Activated CD4-positive, alpha-beta T cell treated with anti-CD3 and anti-CD28 coated beads for 36 hours (primary cell): ENCODE measurements at regions of chr1 and their contacts with region 1.

Region 1: DNA sequence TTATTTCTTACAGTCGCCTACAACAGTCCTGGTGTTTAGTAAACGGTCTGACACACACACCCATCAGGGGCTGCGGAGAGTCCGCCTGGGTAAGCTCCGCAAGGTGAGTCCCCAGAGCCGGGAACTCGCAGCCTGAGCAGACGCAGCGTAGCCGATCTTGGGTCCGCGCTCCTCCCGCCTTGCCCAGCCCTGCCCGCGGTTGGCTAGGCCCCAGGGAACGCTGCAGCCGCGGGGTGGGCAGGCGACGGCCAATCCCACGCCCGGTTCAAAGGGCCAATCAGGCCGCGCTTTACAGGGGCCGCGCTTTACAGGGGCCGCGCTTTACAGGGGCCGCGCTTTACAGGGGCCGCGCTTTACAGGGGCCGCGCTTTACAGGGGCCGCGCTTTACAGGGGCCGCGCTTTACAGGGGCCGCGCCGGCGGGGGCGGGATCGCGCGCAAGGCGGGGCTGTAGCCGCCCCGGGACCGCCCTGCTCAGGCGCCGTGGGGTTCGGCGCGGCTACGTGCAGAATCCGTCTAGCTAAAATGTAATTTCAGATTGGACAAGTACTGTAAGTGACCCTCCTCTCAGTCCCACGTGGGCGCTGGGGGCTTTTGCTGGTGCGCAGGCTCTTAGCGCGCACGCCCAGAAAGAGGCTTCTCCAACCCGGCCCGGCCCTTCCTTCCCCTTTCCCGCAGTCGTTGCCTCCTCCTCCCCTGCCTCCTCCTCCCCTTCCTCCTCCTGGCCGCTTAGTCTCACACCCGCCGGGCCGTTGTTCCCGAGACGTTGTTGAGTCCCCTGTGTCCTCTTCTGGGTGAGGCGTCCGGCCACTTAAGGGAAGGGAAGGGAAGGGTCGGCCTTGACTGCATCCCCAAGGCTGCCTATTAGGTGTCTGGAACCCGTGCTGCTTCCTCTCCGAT is at the start of gene FGGY:
- DNase-seq: peak; percentile 91
- ATAC-seq: peak; percentile 94
- H3K4me3 Mint-ChIP-seq: peak within 1 kb of the TSS; percentile 88
- H3K27ac Mint-ChIP-seq: peak within 1 kb of the TSS; percentile 73
- H3K4me1 Mint-ChIP-seq: peaks cover 20% of the 10 kb centered on the region
- H3K27me3 Mint-ChIP-seq: no peaks in the 10 kb centered on the region
- total RNA-seq, gene FGGY: 5.6 to 8.1 TPM

Region 2: GRCh38 chr1:58755468-58755872 is 541.1 kb before region 1 on chr1:
- CTCF ChIA-PET with region 1: no interaction called
- POLR2A ChIA-PET with region 1: no interaction called
- intact Hi-C with region 1: loop called in 1 of 2 experiments (anchors 10 kb)
- DNase-seq: peak; percentile 82
- ATAC-seq: peak; percentile 96
- H3K4me3 Mint-ChIP-seq: peak overlapping the region; percentile 30
- H3K27ac Mint-ChIP-seq: peak overlapping the region; percentile 84
- H3K4me1 Mint-ChIP-seq: peaks cover 36% of the 10 kb centered on the region
- H3K27me3 Mint-ChIP-seq: no peaks in the 10 kb centered on the region

Region 3: GRCh38 chr1:58903514-58904298 is 392.9 kb before region 1 on chr1:
- CTCF ChIA-PET with region 1: no interaction called
- POLR2A ChIA-PET with region 1: no interaction called
- intact Hi-C with region 1: loop called (anchors 5 kb)
- DNase-seq: peak; percentile 92
- ATAC-seq: peak; percentile 94
- H3K4me3 Mint-ChIP-seq: peak overlapping the region; percentile 62
- H3K27ac Mint-ChIP-seq: peak overlapping the region; percentile 80
- H3K4me1 Mint-ChIP-seq: peaks cover 15% of the 10 kb centered on the region
- H3K27me3 Mint-ChIP-seq: no peaks in the 10 kb centered on the region

Region 4: DNA sequence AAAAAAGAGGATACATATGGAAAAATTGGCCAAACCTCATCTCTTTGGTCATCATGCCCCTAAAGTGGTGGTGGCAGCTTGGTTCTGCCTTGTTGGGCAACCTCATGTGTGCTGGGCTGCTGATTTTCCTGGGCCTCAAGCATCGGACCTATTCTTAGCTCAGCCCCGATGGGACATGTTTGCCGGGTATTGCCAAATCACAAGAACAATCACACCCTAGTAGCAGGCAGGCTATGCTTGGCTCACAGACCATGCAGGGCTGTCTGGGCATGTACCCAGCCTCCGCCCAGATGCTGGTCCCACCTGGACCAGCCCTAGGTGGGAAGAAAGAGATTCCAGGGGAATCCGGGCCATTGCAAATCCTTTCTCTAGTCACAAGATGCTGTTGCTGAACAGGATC is 189.1 kb before region 1 on chr1:
- CTCF ChIA-PET with region 1: no interaction called
- POLR2A ChIA-PET with region 1: no interaction called
- intact Hi-C with region 1: no loop called
- DNase-seq: no peak
- ATAC-seq: no peak
- H3K4me3 Mint-ChIP-seq: no peak overlapping the region
- H3K27ac Mint-ChIP-seq: no peak overlapping the region
- H3K4me1 Mint-ChIP-seq: no peaks in the 10 kb centered on the region
- H3K27me3 Mint-ChIP-seq: no peaks in the 10 kb centered on the region

Region 5: DNA sequence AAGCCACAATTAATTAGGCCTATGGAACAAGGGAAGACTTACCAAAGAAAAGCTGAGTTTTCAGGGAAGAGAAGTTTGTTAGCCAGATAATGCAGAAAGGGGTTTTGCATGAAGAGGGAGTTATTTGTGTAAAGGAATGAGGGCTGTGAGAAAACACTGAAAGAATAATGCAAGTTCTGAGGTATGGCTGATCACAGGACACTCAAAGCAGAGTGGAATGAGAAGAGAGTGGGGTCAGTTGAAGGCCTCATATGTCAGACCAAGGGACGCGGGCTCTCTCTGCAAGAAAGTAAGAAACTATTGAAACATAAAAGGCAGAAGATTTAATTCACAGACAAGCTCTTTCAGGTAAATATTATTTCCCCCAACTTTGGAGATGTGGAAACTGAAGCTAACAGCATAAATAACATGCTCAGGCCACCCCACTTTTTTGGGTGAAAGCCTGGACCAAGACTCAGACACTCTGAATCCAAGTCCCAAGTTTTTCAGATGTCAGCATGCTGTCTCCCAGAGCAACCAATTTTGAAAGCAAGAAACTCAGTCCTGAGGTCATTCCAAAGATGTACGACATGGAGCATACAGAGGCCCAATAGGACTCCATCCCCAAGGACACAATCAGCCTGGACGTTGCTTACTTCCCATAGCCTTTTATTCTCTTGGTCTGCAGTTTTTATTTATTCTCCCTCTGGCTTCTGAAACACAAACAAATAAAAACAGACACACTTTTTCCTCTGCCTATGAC is 47.0 kb before region 1 on chr1:
- CTCF ChIA-PET with region 1: no interaction called
- POLR2A ChIA-PET with region 1: no interaction called
- intact Hi-C with region 1: no loop called
- DNase-seq: no peak
- ATAC-seq: no peak
- H3K4me3 Mint-ChIP-seq: no peak overlapping the region
- H3K27ac Mint-ChIP-seq: no peak overlapping the region
- H3K4me1 Mint-ChIP-seq: no peaks in the 10 kb centered on the region
- H3K27me3 Mint-ChIP-seq: peaks cover 4% of the 10 kb centered on the region

Region 6: DNA sequence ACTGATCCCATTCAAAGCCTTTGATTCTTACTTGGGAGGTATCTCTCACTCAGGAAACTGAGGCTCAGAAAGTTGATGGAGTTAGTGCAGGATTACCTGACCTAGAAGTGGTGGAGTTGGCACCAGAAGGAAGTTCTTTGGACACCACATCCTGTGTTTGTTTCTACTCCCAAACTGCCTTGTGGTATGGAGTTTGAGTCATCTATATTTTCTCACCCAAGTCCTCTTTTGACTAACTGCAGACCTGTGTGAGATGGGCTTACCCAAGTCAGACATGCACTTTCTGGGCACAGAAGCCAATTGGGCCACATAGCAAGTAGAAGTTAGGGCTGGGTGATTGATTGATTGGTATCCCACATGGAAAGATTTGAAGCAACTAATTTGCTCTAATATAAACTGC is 36.4 kb after region 1 on chr1:
- CTCF ChIA-PET with region 1: no interaction called
- POLR2A ChIA-PET with region 1: no interaction called
- intact Hi-C with region 1: loop called (anchors 2 kb)
- DNase-seq: peak; percentile 41
- ATAC-seq: peak; percentile 86
- H3K4me3 Mint-ChIP-seq: no peak overlapping the region
- H3K27ac Mint-ChIP-seq: peak overlapping the region; percentile 20
- H3K4me1 Mint-ChIP-seq: peaks cover 27% of the 10 kb centered on the region
- H3K27me3 Mint-ChIP-seq: no peaks in the 10 kb centered on the region

Region 7: GRCh38 chr1:59342801-59343575 is 46.4 kb after region 1 on chr1:
- CTCF ChIA-PET with region 1: no interaction called
- POLR2A ChIA-PET with region 1: no interaction called
- intact Hi-C with region 1: no loop called
- DNase-seq: no peak
- ATAC-seq: no peak
- H3K4me3 Mint-ChIP-seq: no peak overlapping the region
- H3K27ac Mint-ChIP-seq: no peak overlapping the region
- H3K4me1 Mint-ChIP-seq: no peaks in the 10 kb centered on the region
- H3K27me3 Mint-ChIP-seq: no peaks in the 10 kb centered on the region

Region 8: GRCh38 chr1:59375321-59376220 is 79.0 kb after region 1 on chr1:
- CTCF ChIA-PET with region 1: no interaction called
- POLR2A ChIA-PET with region 1: no interaction called
- intact Hi-C with region 1: no loop called
- DNase-seq: no peak
- ATAC-seq: no peak
- H3K4me3 Mint-ChIP-seq: no peak overlapping the region
- H3K27ac Mint-ChIP-seq: no peak overlapping the region
- H3K4me1 Mint-ChIP-seq: peaks cover 9% of the 10 kb centered on the region
- H3K27me3 Mint-ChIP-seq: no peaks in the 10 kb centered on the region